ENCODE measurements at regions of chr9 and their contacts with region 1.

Region 1: DNA sequence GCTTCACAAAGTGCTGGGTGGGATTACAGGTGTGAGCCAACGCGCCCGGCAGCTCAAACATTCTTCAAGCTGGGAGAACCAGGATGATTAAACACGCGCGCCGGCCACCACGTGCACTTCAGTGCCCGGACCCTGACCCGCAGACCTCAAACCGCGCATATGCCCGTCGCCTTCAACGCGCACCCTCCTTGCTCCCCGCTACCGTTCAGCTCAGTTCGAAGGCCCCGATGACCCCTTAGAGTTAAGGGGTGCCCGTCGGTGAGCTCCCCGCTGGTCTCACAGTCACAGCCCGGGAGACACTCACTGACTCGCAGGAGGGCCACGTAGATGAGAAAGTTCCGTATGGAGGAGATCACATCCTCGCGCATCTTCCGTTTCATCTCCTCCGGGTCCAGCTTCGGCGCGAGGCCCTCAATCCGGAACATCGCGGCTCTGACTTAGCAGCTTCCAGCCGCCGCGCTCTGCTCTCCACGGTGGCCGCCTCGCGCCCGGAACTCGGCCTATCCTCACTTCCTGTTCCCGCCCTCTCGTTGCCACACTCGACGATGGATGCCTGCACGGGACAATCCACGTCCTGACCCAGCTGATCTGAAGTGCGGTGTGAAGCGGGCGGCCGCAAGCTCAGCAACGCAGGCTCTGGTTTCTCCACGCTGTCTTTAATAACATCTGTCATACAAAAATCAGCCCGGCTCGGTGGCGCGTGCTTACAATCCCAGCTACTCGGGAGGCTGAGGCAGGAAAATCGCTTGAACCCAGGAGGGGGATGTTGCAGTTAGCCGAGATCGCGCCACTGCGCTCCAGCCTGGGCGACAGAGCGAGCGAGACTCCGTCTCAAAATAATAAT is at the start of gene TOMM5:
- DNase-seq: peak; percentile 93 to 95 (median 95)
- ATAC-seq: peak; percentile 99 to 100 (median 99)
- H3K4me3 ChIP-seq: peak within 1 kb of the TSS; percentile 61 to 98 (median 83)
- H3K27ac ChIP-seq: peak within 1 kb of the TSS in 11 of 12 donors; percentile 72 to 91 (median 84)
- H3K4me1 ChIP-seq: peaks cover 0 to 35% (median 16%) of the 10 kb centered on the region in 12 donors
- H3K27me3 ChIP-seq: peaks cover 0 to 6% (median 0%) of the 10 kb centered on the region in 9 donors
- CTCF ChIP-seq: peak in 2 of 12 donors; percentile 5 to 24
- POLR2A ChIP-seq: peak in 1 of 2 donors; percentile 70
- total RNA-seq, gene TOMM5: 39.7 to 64.2 (median 50.3) TPM

Region 2: GRCh38 chr9:36961561-36962298 is 630.6 kb before region 1 on chr9:
- intact Hi-C with region 1: no loop called
- DNase-seq: no peak
- ATAC-seq: no peak
- H3K4me3 ChIP-seq: peak overlapping the region in 2 of 12 donors; percentile 7 to 30
- H3K27ac ChIP-seq: no peak overlapping the region
- H3K4me1 ChIP-seq: no peaks in the 10 kb centered on the region
- H3K27me3 ChIP-seq: peaks cover 0 to 30% (median 3%) of the 10 kb centered on the region in 9 donors
- CTCF ChIP-seq: no peak
- POLR2A ChIP-seq: no peak

Region 3: GRCh38 chr9:37465249-37466036 is 126.9 kb before region 1 on chr9 and contains the start of gene ZBTB5:
- intact Hi-C with region 1: loop called in 2 of 10 experiments (anchors 5 kb)
- DNase-seq: peak; percentile 99 to 100 (median 99)
- ATAC-seq: peak; percentile 89 to 93 (median 92)
- H3K4me3 ChIP-seq: peak within 1 kb of the TSS; percentile 68 to 99 (median 92)
- H3K27ac ChIP-seq: peak within 1 kb of the TSS; percentile 86 to 99 (median 97)
- H3K4me1 ChIP-seq: peaks cover 0 to 40% (median 25%) of the 10 kb centered on the region in 12 donors
- H3K27me3 ChIP-seq: no peaks in the 10 kb centered on the region
- CTCF ChIP-seq: no peak
- POLR2A ChIP-seq: peak in 1 of 2 donors; percentile 92
- total RNA-seq, gene ZBTB5: 5.2 to 8.0 (median 6.3) TPM

Region 4: GRCh38 chr9:37650873-37651768 is 58.8 kb after region 1 on chr9 and contains the start of gene FRMPD1:
- intact Hi-C with region 1: loop called in 2 of 10 experiments (anchors 5 kb)
- DNase-seq: peak; percentile 37 to 79 (median 61)
- ATAC-seq: peak; percentile 47 to 93 (median 86)
- H3K4me3 ChIP-seq: peak within 1 kb of the TSS; percentile 40 to 73 (median 64)
- H3K27ac ChIP-seq: peak within 1 kb of the TSS in 1 of 12 donors; percentile 28
- H3K4me1 ChIP-seq: peaks cover 3 to 14% (median 7%) of the 10 kb centered on the region in 12 donors
- H3K27me3 ChIP-seq: peaks cover 0 to 54% (median 9%) of the 10 kb centered on the region in 9 donors
- CTCF ChIP-seq: no peak
- POLR2A ChIP-seq: no peak
- total RNA-seq, gene FRMPD1: 0.59 to 1.9 (median 1.0) TPM

Region 5: DNA sequence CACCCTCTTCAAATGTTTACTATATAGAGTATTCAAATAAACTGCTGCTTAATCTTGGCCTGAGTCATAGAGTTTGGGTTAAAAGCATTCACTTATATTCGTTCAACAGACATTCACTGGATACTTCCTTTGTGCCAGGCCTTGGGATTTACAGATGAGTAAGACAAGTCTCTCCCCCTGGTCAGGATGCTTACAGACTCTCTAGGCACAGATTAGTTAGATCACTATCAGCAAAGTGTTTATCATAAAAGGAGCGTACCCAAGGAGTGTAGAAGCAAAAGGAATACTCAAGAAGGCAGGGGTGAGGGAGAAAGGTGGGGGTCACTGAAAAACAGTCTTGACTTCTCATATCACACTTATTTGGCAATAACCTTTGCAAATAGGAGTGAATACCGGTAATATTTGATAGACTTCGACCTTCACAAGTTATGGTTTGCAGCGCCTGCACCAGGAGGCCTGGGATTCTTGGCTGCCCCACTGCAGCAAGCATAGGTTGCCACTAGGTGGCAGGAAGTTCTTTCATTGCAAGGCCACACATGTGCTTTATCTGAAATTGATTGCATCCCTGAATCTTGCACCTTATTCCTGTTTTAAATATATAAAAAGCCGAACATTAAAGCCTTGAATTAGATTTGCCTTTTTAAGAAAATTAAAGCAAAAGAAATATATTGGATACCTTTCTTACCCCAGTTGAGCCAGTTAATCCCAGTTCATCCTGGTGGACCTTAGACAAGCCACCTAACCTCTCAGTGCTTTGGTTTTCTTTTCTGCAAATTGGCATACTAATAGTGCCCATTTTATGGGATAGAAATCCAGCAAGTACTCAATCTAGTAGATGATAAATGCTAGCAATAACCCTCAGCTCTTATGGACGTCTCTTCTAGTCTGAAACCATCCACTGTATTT is 154.8 kb after region 1 on chr9:
- intact Hi-C with region 1: loop called in 5 of 10 experiments (anchors 10 kb)
- DNase-seq: peak in 2 of 5 donors; percentile 39 to 49
- ATAC-seq: peak in 3 of 4 donors; percentile 77 to 88 (median 78)
- H3K4me3 ChIP-seq: no peak overlapping the region
- H3K27ac ChIP-seq: no peak overlapping the region
- H3K4me1 ChIP-seq: no peaks in the 10 kb centered on the region
- H3K27me3 ChIP-seq: no peaks in the 10 kb centered on the region
- CTCF ChIP-seq: peak; percentile 76 to 94 (median 84)
- POLR2A ChIP-seq: no peak

Region 6: DNA sequence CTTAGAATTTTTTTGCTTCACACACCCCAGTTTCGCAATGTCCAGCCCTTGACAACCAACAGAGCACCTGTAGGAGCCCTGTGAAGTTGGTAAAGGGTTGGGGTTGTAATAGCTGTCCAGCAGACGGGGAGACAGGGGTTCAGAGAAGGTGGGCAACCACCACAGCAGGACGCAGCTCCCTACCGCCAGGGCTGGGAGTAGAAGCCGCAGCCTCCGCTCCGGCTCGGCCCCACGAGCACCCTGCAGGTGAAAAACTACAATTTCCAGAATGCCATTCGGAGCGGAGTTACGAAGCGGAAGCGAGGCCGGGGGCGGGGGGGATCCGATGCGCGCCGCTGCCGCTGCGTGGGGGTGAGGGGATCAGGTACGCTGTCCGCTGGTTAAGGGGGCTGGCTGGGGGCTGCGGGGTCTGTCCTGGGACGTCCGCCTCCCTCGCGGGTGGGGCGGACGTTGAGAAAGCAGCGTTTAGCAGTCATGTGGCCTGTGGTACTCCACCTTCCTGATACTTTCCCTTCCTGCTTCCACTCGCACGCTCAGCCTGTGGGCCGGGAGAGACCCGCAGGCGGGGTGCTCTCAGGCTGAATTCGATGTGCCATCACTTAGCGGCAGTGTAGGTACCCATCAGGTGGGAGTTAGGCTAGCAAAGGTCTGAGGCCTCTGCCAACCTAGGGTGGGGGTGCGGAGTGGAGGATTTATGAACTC is 161.3 kb after region 1 on chr9 and contains the start of gene TRMT10B:
- intact Hi-C with region 1: loop called in 5 of 10 experiments (anchors 10 kb)
- DNase-seq: peak; percentile 67 to 80 (median 75)
- ATAC-seq: peak; percentile 84 to 97 (median 94)
- H3K4me3 ChIP-seq: peak within 1 kb of the TSS; percentile 69 to 95 (median 86)
- H3K27ac ChIP-seq: peak within 1 kb of the TSS; percentile 56 to 88 (median 80)
- H3K4me1 ChIP-seq: peaks cover 0 to 15% (median 7%) of the 10 kb centered on the region in 12 donors
- H3K27me3 ChIP-seq: no peaks in the 10 kb centered on the region
- CTCF ChIP-seq: no peak
- POLR2A ChIP-seq: no peak
- total RNA-seq, gene TRMT10B: 2.7 to 5.5 (median 3.5) TPM

Region 7: GRCh38 chr9:37784616-37785483 is 192.5 kb after region 1 on chr9 and contains the start of gene EXOSC3:
- intact Hi-C with region 1: loop called in 4 of 10 experiments (anchors 5 to 10 kb)
- DNase-seq: peak; percentile 88 to 93 (median 92)
- ATAC-seq: peak; percentile 95 to 98 (median 98)
- H3K4me3 ChIP-seq: peak within 1 kb of the TSS; percentile 74 to 98 (median 88)
- H3K27ac ChIP-seq: peak within 1 kb of the TSS; percentile 25 to 90 (median 84)
- H3K4me1 ChIP-seq: peaks cover 3 to 28% (median 18%) of the 10 kb centered on the region in 12 donors
- H3K27me3 ChIP-seq: peaks cover 0 to 9% (median 0%) of the 10 kb centered on the region in 9 donors
- CTCF ChIP-seq: peak in 7 of 12 donors; percentile 9 to 24 (median 16)
- POLR2A ChIP-seq: peak in 1 of 2 donors; percentile 70
- total RNA-seq, gene EXOSC3: 9.6 to 18.6 (median 14.0) TPM

Region 8: GRCh38 chr9:37800631-37801286 is 208.4 kb after region 1 on chr9 and contains the start of gene DCAF10:
- intact Hi-C with region 1: loop called in 2 of 10 experiments (anchors 5 to 10 kb)
- DNase-seq: peak; percentile 87 to 94 (median 88)
- ATAC-seq: peak; percentile 79 to 97 (median 96)
- H3K4me3 ChIP-seq: peak within 1 kb of the TSS; percentile 77 to 100 (median 95)
- H3K27ac ChIP-seq: peak within 1 kb of the TSS; percentile 28 to 93 (median 88)
- H3K4me1 ChIP-seq: peaks cover 0 to 33% (median 26%) of the 10 kb centered on the region in 12 donors
- H3K27me3 ChIP-seq: no peaks in the 10 kb centered on the region
- CTCF ChIP-seq: no peak
- POLR2A ChIP-seq: peak in 1 of 2 donors; percentile 73
- total RNA-seq, gene DCAF10: 13.3 to 24.3 (median 20.1) TPM

Region 9: GRCh38 chr9:38079461-38080031 is 487.2 kb after region 1 on chr9:
- intact Hi-C with region 1: no loop called
- DNase-seq: peak in 2 of 5 donors; percentile 25 to 59
- ATAC-seq: peak in 3 of 4 donors; percentile 19 to 51 (median 38)
- H3K4me3 ChIP-seq: no peak overlapping the region
- H3K27ac ChIP-seq: peak overlapping the region in 1 of 12 donors; percentile 33
- H3K4me1 ChIP-seq: peaks cover 0 to 49% (median 11%) of the 10 kb centered on the region in 12 donors
- H3K27me3 ChIP-seq: no peaks in the 10 kb centered on the region
- CTCF ChIP-seq: no peak
- POLR2A ChIP-seq: no peak